Left ventricle myocardium superior (tissue), 1 donor: ENCODE measurements at regions of chr3 and their contacts with region 1.

Region 1: GRCh38 chr3:167684388-167684993 is 30.7 kb upstream of the WDR49 start:
- DNase-seq: no peak
- ATAC-seq: peak; percentile 49

Region 2: DNA sequence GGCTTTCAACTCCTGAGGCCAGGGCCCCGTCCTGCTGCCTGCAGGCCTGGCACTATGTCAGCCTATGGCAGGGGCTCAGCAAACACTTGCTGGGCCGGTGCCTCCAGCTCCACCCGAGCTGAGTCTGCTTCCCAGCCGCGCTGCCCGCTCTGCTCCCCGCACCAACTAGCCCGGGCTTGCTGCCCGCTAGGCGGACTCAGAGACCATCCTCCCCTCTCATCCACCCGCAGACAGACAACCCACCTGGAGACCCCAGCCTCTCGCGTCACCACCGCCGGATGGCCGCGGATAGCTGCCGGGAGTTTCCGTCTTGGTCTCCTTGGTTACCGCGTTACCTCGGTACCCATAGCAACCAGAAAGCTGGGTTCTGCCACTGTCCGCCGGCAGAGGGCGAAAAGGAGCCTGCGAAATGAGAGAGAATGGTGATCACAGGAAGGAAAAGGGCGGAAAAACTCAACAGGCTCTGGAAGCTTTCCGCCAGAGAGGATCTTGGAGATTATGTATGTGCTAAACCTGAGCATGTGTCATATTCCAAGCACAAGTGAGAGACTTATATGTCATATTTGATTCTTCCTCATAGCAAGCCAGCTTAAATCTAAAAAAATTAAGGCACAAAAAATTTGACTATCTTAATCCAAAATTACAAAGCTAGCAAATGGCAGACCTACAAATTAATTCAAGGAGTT is 304.3 kb before region 1 on chr3 and contains the start of gene ZBBX:
- intact Hi-C with region 1: loop called (anchors 5 kb)
- DNase-seq: peak; percentile 84
- ATAC-seq: peak; percentile 90
- total RNA-seq, gene ZBBX: not detected

Region 3: DNA sequence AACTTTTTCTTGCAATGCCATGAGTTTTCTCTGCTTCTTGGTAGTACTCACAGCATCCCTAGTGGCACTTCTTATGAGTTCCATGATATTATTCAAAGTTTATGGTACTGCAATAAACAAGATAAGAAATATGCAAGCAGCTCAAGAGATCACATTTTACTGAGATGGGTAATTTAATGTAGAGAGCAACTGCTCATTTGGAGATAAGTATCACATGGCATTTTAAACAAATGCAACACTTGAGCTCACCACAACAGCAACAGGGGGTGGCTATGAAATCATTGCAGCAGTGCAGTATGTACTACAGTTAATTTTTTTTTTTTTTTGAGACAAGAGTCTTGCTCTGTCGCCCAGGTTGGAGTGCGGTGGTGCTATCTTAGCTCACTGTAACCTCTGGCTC is 115.9 kb before region 1 on chr3:
- intact Hi-C with region 1: no loop called
- DNase-seq: no peak
- ATAC-seq: no peak